Caco-2 (cell line): ENCODE measurements at regions of chr3 and their contacts with region 1.

Region 1: DNA sequence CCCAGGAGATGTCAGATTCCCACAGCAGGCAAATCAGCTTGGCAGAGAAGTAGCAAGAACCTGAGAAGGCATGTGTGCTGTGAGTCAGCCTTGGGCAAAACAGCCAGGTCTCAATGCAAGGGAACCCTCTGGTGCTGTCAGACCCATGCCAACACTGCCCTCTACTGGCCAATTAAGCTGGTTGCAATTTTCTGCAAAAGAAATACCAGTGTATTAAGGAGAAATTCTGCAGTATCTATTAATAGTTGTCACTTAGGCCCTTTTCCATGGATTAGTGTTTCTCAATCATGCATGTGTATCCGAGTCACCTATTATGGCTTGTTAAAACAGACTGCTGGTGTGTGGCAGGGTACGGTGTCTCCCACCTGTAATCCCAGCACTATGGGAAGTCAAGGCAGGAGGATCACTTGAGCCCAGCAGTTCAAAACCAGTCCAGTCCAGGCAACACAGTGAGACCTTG is 26.2 kb downstream of the MAP4 start:
- DNase-seq: peak; percentile 74 to 76
- H3K4me3 ChIP-seq: no peak overlapping the region
- H3K4me3 Mint-ChIP-seq: no peak overlapping the region
- H3K27ac Mint-ChIP-seq: no peak overlapping the region
- H3K4me1 ChIP-seq: no peaks in the 10 kb centered on the region
- H3K4me1 Mint-ChIP-seq: no peaks in the 10 kb centered on the region
- H3K27me3 ChIP-seq: no peaks in the 10 kb centered on the region
- H3K27me3 Mint-ChIP-seq: no peaks in the 10 kb centered on the region
- CTCF ChIP-seq: peak; percentile 80 to 84

Region 2: GRCh38 chr3:47836986-47837385 is 153.0 kb before region 1 on chr3:
- CTCF ChIA-PET with region 1: interaction called, 8 read pairs
- POLR2A ChIA-PET with region 1: no interaction called
- intact Hi-C with region 1: loop called (anchors 1 kb)
- DNase-seq: no peak
- H3K4me3 ChIP-seq: no peak overlapping the region
- H3K4me3 Mint-ChIP-seq: no peak overlapping the region
- H3K27ac Mint-ChIP-seq: no peak overlapping the region
- H3K4me1 ChIP-seq: no peaks in the 10 kb centered on the region
- H3K4me1 Mint-ChIP-seq: peaks cover 7% of the 10 kb centered on the region
- H3K27me3 ChIP-seq: no peaks in the 10 kb centered on the region
- H3K27me3 Mint-ChIP-seq: no peaks in the 10 kb centered on the region
- CTCF ChIP-seq: no peak

Region 3: GRCh38 chr3:47849699-47850563 is 140.1 kb before region 1 on chr3:
- CTCF ChIA-PET with region 1: no interaction called
- POLR2A ChIA-PET with region 1: no interaction called
- intact Hi-C with region 1: loop called (anchors 5 kb)
- DNase-seq: peak in 1 of 2 experiments; percentile 41
- H3K4me3 ChIP-seq: no peak overlapping the region
- H3K4me3 Mint-ChIP-seq: peak overlapping the region; percentile 29
- H3K27ac Mint-ChIP-seq: peak overlapping the region; percentile 58
- H3K4me1 ChIP-seq: no peaks in the 10 kb centered on the region
- H3K4me1 Mint-ChIP-seq: no peaks in the 10 kb centered on the region
- H3K27me3 ChIP-seq: no peaks in the 10 kb centered on the region
- H3K27me3 Mint-ChIP-seq: no peaks in the 10 kb centered on the region
- CTCF ChIP-seq: peak; percentile 40 to 42

Region 4: GRCh38 chr3:47940232-47940631 is 49.8 kb before region 1 on chr3:
- CTCF ChIA-PET with region 1: no interaction called
- POLR2A ChIA-PET with region 1: no interaction called
- intact Hi-C with region 1: no loop called
- DNase-seq: no peak
- H3K4me3 ChIP-seq: no peak overlapping the region
- H3K4me3 Mint-ChIP-seq: no peak overlapping the region
- H3K27ac Mint-ChIP-seq: no peak overlapping the region
- H3K4me1 ChIP-seq: no peaks in the 10 kb centered on the region
- H3K4me1 Mint-ChIP-seq: no peaks in the 10 kb centered on the region
- H3K27me3 ChIP-seq: no peaks in the 10 kb centered on the region
- H3K27me3 Mint-ChIP-seq: no peaks in the 10 kb centered on the region
- CTCF ChIP-seq: no peak

Region 5: GRCh38 chr3:48001991-48002390 is 12.0 kb after region 1 on chr3:
- CTCF ChIA-PET with region 1: no interaction called
- POLR2A ChIA-PET with region 1: no interaction called
- intact Hi-C with region 1: no loop called
- DNase-seq: peak in 1 of 2 experiments; percentile 14
- H3K4me3 ChIP-seq: no peak overlapping the region
- H3K4me3 Mint-ChIP-seq: no peak overlapping the region
- H3K27ac Mint-ChIP-seq: no peak overlapping the region
- H3K4me1 ChIP-seq: peaks cover 5% of the 10 kb centered on the region; the same call in 1 of the 2 replicates
- H3K4me1 Mint-ChIP-seq: no peaks in the 10 kb centered on the region
- H3K27me3 ChIP-seq: no peaks in the 10 kb centered on the region
- H3K27me3 Mint-ChIP-seq: no peaks in the 10 kb centered on the region
- CTCF ChIP-seq: no peak

Region 6: GRCh38 chr3:48240711-48241491 is 250.9 kb after region 1 on chr3 and contains the start of gene ZNF589:
- CTCF ChIA-PET with region 1: no interaction called
- POLR2A ChIA-PET with region 1: no interaction called
- intact Hi-C with region 1: no loop called
- DNase-seq: peak; percentile 94 to 95
- H3K4me3 ChIP-seq: peak within 1 kb of the TSS; percentile 58
- H3K4me3 Mint-ChIP-seq: peak within 1 kb of the TSS; percentile 85
- H3K27ac Mint-ChIP-seq: peak within 1 kb of the TSS; percentile 77
- H3K4me1 ChIP-seq: peaks cover 15% of the 10 kb centered on the region
- H3K4me1 Mint-ChIP-seq: no peaks in the 10 kb centered on the region
- H3K27me3 ChIP-seq: no peaks in the 10 kb centered on the region
- H3K27me3 Mint-ChIP-seq: no peaks in the 10 kb centered on the region
- CTCF ChIP-seq: peak in 1 of 2 experiments; percentile 40
- total RNA-seq, gene ZNF589: 9.7 and 10.9 TPM in 2 replicates